PC-9 (cell line): ENCODE measurements at regions of chr6 and their contacts with region 1.

Region 1: DNA sequence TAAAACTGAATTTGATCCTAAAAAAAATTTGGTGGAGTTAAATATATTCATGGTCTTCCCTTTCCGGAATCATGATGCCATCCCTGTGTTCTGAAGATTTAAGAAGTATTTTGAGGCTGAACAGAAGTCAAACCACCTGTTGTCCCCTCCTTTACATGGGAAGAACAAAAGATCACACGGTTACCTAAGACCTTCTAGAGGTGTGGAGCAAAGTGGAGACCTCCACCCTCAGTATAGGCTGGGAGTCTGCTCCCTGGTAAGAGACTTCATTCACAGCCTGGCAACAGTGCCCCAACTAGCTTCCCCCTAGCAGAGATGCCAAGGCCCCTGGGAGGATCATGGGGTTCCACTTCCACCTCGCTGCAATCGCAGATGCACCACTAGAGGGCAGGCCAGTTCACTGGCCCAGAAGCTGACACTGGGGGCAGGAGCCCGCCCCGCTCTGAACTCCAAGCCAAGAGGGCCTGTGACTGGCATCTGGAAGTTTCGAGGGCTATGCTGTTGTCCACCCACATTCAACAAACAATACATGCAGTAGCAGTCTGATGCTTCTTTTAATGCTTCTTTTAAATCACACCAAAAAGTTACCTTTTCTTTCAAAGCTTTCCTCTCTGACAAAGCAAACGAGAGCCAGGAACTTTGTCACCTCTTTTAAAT is 19.5 kb upstream of the UBE2J1 start:
- DNase-seq: peak in 1 of 2 experiments; percentile 64
- H3K4me3 ChIP-seq: no peak overlapping the region
- H3K27ac ChIP-seq: no peak overlapping the region
- H3K4me1 ChIP-seq: peaks cover 15% of the 10 kb centered on the region
- H3K27me3 ChIP-seq: no peaks in the 10 kb centered on the region
- CTCF ChIP-seq: peak; percentile 82

Region 2: DNA sequence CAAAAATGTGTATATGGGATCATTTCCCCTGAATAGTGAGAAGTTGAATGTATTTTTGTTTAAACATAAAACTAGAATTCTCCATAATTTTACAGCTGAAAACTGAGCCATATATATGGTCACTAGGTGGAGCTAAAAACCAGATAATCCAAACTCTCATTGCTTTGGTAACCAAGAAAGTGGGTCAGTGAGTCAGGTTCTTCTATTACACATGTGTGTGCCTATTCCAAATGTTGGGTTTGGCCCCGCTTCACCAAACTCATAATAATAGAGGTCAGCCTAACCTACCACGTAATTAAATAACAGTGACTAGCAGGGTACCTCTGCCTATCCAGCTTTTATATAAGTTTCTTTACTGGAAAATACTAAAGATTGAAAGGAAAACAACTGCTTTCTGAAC is 389.3 kb before region 1 on chr6:
- CTCF ChIA-PET with region 1: no interaction called
- POLR2A ChIA-PET with region 1: no interaction called
- intact Hi-C with region 1: loop called (anchors 1 kb)
- DNase-seq: peak in 1 of 2 experiments; percentile 42
- H3K4me3 ChIP-seq: no peak overlapping the region
- H3K27ac ChIP-seq: no peak overlapping the region
- H3K4me1 ChIP-seq: no peaks in the 10 kb centered on the region
- H3K27me3 ChIP-seq: no peaks in the 10 kb centered on the region
- CTCF ChIP-seq: peak; percentile 77

Region 3: GRCh38 chr6:89122625-89123024 is 249.4 kb before region 1 on chr6:
- CTCF ChIA-PET with region 1: no interaction called
- POLR2A ChIA-PET with region 1: no interaction called
- intact Hi-C with region 1: loop called (anchors 1 kb)
- DNase-seq: peak in 1 of 2 experiments; percentile 45
- H3K4me3 ChIP-seq: no peak overlapping the region
- H3K27ac ChIP-seq: no peak overlapping the region
- H3K4me1 ChIP-seq: no peaks in the 10 kb centered on the region
- H3K27me3 ChIP-seq: no peaks in the 10 kb centered on the region
- CTCF ChIP-seq: peak; percentile 60

Region 4: GRCh38 chr6:89281779-89282246 is 90.2 kb before region 1 on chr6:
- CTCF ChIA-PET with region 1: interaction called, 5 read pairs
- POLR2A ChIA-PET with region 1: no interaction called
- intact Hi-C with region 1: loop called (anchors 5 kb)
- DNase-seq: peak in 1 of 2 experiments; percentile 14
- H3K4me3 ChIP-seq: no peak overlapping the region
- H3K27ac ChIP-seq: no peak overlapping the region
- H3K4me1 ChIP-seq: no peaks in the 10 kb centered on the region
- H3K27me3 ChIP-seq: no peaks in the 10 kb centered on the region
- CTCF ChIP-seq: peak; percentile 58

Region 5: DNA sequence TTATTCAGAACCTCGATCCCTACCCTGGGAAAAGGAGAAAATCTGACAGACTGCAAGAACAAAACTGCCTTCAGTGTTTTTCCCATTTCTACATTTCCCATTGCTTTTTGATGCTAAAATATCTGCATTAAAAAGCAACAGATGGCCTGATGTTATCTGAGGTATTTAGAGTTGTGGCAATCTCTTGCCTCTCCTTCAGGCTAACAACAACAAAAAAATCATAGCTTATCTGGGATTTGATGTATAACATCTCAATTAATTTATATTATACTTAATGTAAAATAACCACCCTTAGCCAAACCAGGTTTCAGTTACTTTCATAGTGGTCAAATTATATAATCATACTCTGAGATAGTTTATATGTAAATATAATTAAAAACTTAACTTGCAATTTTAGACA is 41.1 kb before region 1 on chr6:
- CTCF ChIA-PET with region 1: no interaction called
- POLR2A ChIA-PET with region 1: no interaction called
- intact Hi-C with region 1: no loop called
- DNase-seq: no peak
- H3K4me3 ChIP-seq: no peak overlapping the region
- H3K27ac ChIP-seq: no peak overlapping the region
- H3K4me1 ChIP-seq: no peaks in the 10 kb centered on the region
- H3K27me3 ChIP-seq: no peaks in the 10 kb centered on the region
- CTCF ChIP-seq: no peak

Region 6: GRCh38 chr6:89610149-89610642 is 238.2 kb after region 1 on chr6:
- CTCF ChIA-PET with region 1: no interaction called
- POLR2A ChIA-PET with region 1: no interaction called
- intact Hi-C with region 1: loop called (anchors 1 kb)
- DNase-seq: peak in 1 of 2 experiments; percentile 50
- H3K4me3 ChIP-seq: no peak overlapping the region
- H3K27ac ChIP-seq: no peak overlapping the region
- H3K4me1 ChIP-seq: no peaks in the 10 kb centered on the region
- H3K27me3 ChIP-seq: no peaks in the 10 kb centered on the region
- CTCF ChIP-seq: peak; percentile 76